ENCODE measurements at regions of chr7 and their contacts with region 1.

Region 1: GRCh38 chr7:13894956-13895355 is 94.5 kb downstream of the ETV1 start:
- DNase-seq: no peak
- ATAC-seq: no peak
- H3K4me3 ChIP-seq: no peak overlapping the region
- H3K27ac ChIP-seq: no peak overlapping the region
- H3K4me1 ChIP-seq: peaks cover 0 to 12% (median 5%) of the 10 kb centered on the region in 9 donors
- H3K27me3 ChIP-seq: no peaks in the 10 kb centered on the region
- CTCF ChIP-seq: no peak

Region 2: GRCh38 chr7:12794722-12795302 is 1100.1 kb before region 1 on chr7:
- intact Hi-C with region 1: loop called in 1 of 10 experiments (anchors 5 kb)
- DNase-seq: no peak
- ATAC-seq: peak in 1 of 8 donors; percentile 22
- H3K4me3 ChIP-seq: no peak overlapping the region
- H3K27ac ChIP-seq: no peak overlapping the region
- H3K4me1 ChIP-seq: peaks cover 0 to 2% (median 0%) of the 10 kb centered on the region in 9 donors
- H3K27me3 ChIP-seq: no peaks in the 10 kb centered on the region
- CTCF ChIP-seq: no peak

Region 3: GRCh38 chr7:13577566-13578145 is 317.3 kb before region 1 on chr7:
- intact Hi-C with region 1: no loop called
- DNase-seq: no peak
- ATAC-seq: no peak
- H3K4me3 ChIP-seq: no peak overlapping the region
- H3K27ac ChIP-seq: no peak overlapping the region
- H3K4me1 ChIP-seq: no peaks in the 10 kb centered on the region
- H3K27me3 ChIP-seq: no peaks in the 10 kb centered on the region
- CTCF ChIP-seq: no peak